CD4-positive, alpha-beta memory T cell (primary cell): ENCODE measurements at regions of chr12 and their contacts with region 1.

Region 1: GRCh38 chr12:49967042-49967776 is 5.5 kb downstream of the AQP5 start:
- DNase-seq: peak; percentile 88 to 93 (median 89)
- H3K4me3 ChIP-seq: peak overlapping the region; percentile 47 to 63
- H3K4me3 Mint-ChIP-seq: peak overlapping the region; percentile 51 to 85 (median 76)
- H3K27ac ChIP-seq: no peak overlapping the region
- H3K27ac Mint-ChIP-seq: peak overlapping the region in 2 of 7 donors; percentile 42 to 46
- H3K4me1 ChIP-seq: peaks cover 10% of the 10 kb centered on the region
- H3K4me1 Mint-ChIP-seq: peaks cover 1 to 11% (median 4%) of the 10 kb centered on the region in 4 donors
- H3K27me3 ChIP-seq: peaks cover 15% of the 10 kb centered on the region
- H3K27me3 Mint-ChIP-seq: peaks cover 20 to 39% of the 10 kb centered on the region in 2 donors

Region 2: DNA sequence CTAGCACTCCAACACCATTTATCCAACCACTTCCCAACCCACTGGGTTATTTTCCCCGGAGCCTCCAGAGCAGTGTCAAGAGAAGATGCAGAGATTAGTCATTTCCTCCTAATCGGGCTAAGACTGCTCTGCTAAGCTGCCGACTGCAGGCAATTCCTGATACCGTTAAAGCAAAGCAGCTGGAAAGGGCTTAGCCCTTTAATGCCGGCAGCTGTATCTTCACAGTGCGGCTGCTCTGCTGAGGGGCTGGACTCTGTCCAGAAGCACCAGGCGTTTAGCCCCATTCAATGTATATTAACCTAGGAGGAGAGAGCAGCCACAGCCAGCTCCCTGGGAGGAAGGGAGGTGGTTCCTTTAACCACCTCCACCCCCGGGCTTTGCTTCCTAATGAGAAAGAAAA is 16.7 kb after region 1 on chr12:
- CTCF ChIA-PET with region 1: interaction called, 52 read pairs
- POLR2A ChIA-PET with region 1: no interaction called
- intact Hi-C with region 1: no loop called
- DNase-seq: no peak
- H3K4me3 ChIP-seq: no peak overlapping the region
- H3K4me3 Mint-ChIP-seq: no peak overlapping the region
- H3K27ac ChIP-seq: no peak overlapping the region
- H3K27ac Mint-ChIP-seq: peak overlapping the region in 1 of 7 donors; percentile 22
- H3K4me1 ChIP-seq: no peaks in the 10 kb centered on the region
- H3K4me1 Mint-ChIP-seq: no peaks in the 10 kb centered on the region
- H3K27me3 ChIP-seq: no peaks in the 10 kb centered on the region
- H3K27me3 Mint-ChIP-seq: no peaks in the 10 kb centered on the region

Region 3: GRCh38 chr12:50050410-50051098 is 83.3 kb after region 1 on chr12:
- CTCF ChIA-PET with region 1: interaction called, 75 read pairs
- POLR2A ChIA-PET with region 1: interaction called, 6 read pairs
- intact Hi-C with region 1: no loop called
- DNase-seq: no peak
- H3K4me3 ChIP-seq: no peak overlapping the region
- H3K4me3 Mint-ChIP-seq: no peak overlapping the region
- H3K27ac ChIP-seq: no peak overlapping the region
- H3K27ac Mint-ChIP-seq: no peak overlapping the region
- H3K4me1 ChIP-seq: peaks cover 1% of the 10 kb centered on the region
- H3K4me1 Mint-ChIP-seq: peaks cover 0 to 1% (median under 1%) of the 10 kb centered on the region in 4 donors
- H3K27me3 ChIP-seq: peaks cover 17% of the 10 kb centered on the region
- H3K27me3 Mint-ChIP-seq: peaks cover 33 to 41% of the 10 kb centered on the region in 2 donors

Region 4: DNA sequence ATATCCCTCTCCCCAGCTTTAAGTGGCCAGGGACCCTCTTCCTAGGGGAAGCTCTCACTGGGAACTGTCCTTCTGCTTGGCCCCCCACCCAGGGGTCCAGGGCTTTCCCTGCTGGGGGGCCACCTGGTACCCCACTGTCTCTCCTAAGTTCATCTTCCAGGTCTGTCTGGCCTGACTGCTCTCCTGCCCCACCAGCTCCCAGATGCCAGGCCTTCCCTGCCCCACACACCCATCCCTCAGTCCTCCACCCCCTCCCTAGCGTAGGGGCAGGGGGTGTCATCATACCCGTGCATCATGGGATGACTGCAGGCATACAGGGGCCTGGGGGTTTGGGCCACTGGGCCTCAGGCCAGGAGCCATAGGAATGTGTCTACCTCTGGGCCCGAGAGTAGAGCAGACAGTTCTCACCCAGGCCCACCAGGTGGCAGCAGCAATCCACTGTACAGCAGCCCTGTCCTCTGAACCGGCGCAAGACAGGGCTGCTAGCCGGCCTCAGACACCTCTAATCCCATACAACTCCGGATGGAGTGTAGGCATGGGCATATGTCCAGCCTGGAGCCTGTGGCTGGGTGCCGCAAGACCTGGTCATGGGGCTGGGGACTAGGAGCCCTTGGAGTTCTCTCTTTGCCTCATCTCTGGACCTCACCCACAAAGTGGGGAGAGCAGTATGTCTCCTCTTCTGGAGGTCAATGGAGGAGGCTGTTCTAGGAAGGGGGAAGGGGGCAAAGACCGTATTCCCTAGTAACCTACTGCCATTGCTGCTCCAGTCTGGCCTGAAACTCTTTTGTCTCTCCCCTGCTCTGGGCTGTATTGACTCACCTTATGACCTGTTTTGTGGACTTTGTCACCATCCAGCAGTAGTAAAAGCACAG is 108.0 kb after region 1 on chr12:
- CTCF ChIA-PET with region 1: interaction called, 65 read pairs
- POLR2A ChIA-PET with region 1: no interaction called
- intact Hi-C with region 1: loop called (anchors 1 kb)
- DNase-seq: peak; percentile 67 to 77 (median 72)
- H3K4me3 ChIP-seq: no peak overlapping the region
- H3K4me3 Mint-ChIP-seq: no peak overlapping the region
- H3K27ac ChIP-seq: no peak overlapping the region
- H3K27ac Mint-ChIP-seq: peak overlapping the region in 2 of 7 donors; percentile 64 to 79
- H3K4me1 ChIP-seq: peaks cover 3% of the 10 kb centered on the region
- H3K4me1 Mint-ChIP-seq: peaks cover 5 to 11% (median 7%) of the 10 kb centered on the region in 4 donors
- H3K27me3 ChIP-seq: no peaks in the 10 kb centered on the region
- H3K27me3 Mint-ChIP-seq: peaks cover 0 to 5% of the 10 kb centered on the region in 2 donors

Region 5: DNA sequence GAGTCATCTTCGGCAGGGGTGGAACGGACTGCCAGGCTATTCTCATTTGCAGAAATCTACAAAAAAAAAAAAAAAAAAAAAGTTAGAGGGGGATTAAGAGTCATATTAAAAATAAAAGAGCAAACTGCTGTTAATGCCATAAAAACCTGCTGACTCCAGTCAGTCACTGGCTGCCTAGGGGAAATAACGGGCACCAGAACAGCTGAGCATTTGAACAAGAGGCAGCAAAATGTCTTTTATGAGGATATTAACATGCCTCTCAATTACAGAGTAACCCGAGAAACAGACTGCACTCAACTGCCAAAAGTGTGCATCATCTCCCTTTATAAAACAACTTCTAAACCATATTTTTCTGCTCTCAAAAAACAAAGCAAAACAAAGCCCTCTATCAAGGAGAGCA is 228.6 kb after region 1 on chr12:
- CTCF ChIA-PET with region 1: no interaction called
- POLR2A ChIA-PET with region 1: no interaction called
- intact Hi-C with region 1: no loop called
- DNase-seq: no peak
- H3K4me3 ChIP-seq: no peak overlapping the region
- H3K4me3 Mint-ChIP-seq: no peak overlapping the region
- H3K27ac ChIP-seq: no peak overlapping the region
- H3K27ac Mint-ChIP-seq: peak overlapping the region in 1 of 7 donors; percentile 64
- H3K4me1 ChIP-seq: peaks cover 5% of the 10 kb centered on the region
- H3K4me1 Mint-ChIP-seq: peaks cover 0 to 6% (median 1%) of the 10 kb centered on the region in 4 donors
- H3K27me3 ChIP-seq: no peaks in the 10 kb centered on the region
- H3K27me3 Mint-ChIP-seq: no peaks in the 10 kb centered on the region